ENCODE measurements at regions of chr14 and their contacts with region 1.

Region 1: DNA sequence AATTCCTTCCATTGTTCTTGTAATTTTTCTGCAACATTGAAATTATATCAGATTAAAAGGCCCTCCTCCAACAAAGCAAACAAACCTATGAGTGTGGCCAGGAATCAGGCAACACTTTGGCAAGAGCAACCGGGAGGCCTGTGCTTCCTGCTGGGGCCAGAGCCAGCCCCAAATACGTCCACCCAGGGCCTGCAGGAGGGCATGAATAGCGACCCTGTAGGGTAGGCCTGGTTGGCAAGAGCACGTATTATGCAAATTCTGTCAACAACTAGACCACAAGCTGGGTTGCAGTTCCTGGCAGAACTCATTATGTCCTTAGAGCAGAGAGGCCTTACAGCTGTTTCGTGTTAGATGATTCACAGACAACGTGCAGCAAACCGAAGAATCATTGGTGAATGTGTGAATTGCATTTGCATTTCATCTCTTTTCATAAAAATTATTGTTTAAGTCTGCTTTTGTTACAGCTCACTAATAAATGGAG is 26.9 kb upstream of the LGALS3 start:
- DNase-seq: peak; percentile 95
- H3K4me3 Mint-ChIP-seq: peak overlapping the region; percentile 81
- H3K27ac Mint-ChIP-seq: peak overlapping the region; percentile 99
- H3K4me1 Mint-ChIP-seq: peaks cover 35% of the 10 kb centered on the region
- H3K27me3 Mint-ChIP-seq: no peaks in the 10 kb centered on the region
- CTCF ChIP-seq: no peak

Region 2: DNA sequence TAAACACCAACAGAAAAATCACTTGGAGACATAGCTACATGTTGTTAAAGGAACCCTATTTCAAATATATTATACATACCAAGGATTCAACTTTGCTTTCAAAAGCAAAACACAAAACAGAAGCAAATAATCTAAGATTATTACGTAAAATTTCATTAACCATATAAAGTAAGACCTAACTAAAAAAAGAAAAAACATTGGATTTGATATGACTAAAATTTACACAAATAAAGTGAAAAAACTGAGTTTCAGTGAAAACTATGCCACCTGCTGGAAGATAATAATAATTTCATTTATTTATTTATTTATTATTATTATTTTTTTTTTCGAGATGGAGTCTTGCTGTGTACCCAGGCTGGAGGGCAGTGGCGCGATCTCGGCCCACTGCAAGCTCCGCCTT is 120.5 kb before region 1 on chr14:
- CTCF ChIA-PET with region 1: no interaction called
- POLR2A ChIA-PET with region 1: no interaction called
- intact Hi-C with region 1: no loop called
- DNase-seq: no peak
- H3K4me3 Mint-ChIP-seq: no peak overlapping the region
- H3K27ac Mint-ChIP-seq: no peak overlapping the region
- H3K4me1 Mint-ChIP-seq: no peaks in the 10 kb centered on the region
- H3K27me3 Mint-ChIP-seq: no peaks in the 10 kb centered on the region
- CTCF ChIP-seq: peak; percentile 45

Region 3: DNA sequence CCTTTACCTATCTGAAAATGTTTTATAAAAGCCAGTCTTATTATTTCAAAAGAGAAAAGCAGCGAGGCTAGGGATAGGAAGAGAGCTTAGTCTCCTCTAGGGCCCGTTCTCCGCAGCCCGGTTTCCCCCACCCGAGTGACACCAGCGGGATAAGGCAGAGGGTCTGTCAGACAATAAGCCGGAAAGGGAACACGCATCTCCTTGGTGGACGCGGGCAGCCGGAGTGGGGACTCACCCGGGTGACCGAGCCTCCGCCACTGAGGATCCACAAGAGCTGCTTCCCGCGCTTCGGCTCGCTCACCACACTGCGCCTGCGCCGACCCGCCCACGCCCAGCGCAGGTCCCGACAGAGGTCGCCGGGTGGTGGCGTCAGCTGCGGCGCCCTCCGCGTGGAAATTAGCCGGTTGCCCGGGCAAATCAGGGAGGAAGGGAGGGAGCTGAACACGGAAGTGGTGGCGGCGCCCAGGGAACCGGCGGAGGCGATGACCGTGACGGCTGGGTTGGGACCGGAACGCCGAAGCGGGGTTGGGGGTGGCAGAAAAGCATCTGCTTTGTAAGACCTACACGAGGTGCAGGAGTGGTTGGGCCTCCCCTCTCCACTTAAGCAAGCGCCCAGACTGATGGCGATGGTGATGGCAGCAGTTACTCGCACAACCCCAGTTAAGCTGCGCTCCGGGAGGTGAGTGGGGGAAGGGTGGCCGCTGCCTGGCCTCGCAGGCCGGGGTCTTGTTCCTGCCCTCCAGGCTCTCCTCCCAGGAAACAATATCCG is 75.2 kb before region 1 on chr14 and contains the starts of genes SOCS4 and WDHD1:
- CTCF ChIA-PET with region 1: no interaction called
- POLR2A ChIA-PET with region 1: interaction called, 20 read pairs
- intact Hi-C with region 1: no loop called
- DNase-seq: peak; percentile 93
- H3K4me3 Mint-ChIP-seq: peak within 1 kb of the TSS; percentile 91
- H3K27ac Mint-ChIP-seq: peak within 1 kb of the TSS; percentile 88
- H3K4me1 Mint-ChIP-seq: peaks cover 20% of the 10 kb centered on the region
- H3K27me3 Mint-ChIP-seq: no peaks in the 10 kb centered on the region
- CTCF ChIP-seq: no peak
- total RNA-seq, gene SOCS4: 24.6 and 29.6 TPM in 2 replicates
- total RNA-seq, gene WDHD1: 5.8 and 6.5 TPM in 2 replicates

Region 4: DNA sequence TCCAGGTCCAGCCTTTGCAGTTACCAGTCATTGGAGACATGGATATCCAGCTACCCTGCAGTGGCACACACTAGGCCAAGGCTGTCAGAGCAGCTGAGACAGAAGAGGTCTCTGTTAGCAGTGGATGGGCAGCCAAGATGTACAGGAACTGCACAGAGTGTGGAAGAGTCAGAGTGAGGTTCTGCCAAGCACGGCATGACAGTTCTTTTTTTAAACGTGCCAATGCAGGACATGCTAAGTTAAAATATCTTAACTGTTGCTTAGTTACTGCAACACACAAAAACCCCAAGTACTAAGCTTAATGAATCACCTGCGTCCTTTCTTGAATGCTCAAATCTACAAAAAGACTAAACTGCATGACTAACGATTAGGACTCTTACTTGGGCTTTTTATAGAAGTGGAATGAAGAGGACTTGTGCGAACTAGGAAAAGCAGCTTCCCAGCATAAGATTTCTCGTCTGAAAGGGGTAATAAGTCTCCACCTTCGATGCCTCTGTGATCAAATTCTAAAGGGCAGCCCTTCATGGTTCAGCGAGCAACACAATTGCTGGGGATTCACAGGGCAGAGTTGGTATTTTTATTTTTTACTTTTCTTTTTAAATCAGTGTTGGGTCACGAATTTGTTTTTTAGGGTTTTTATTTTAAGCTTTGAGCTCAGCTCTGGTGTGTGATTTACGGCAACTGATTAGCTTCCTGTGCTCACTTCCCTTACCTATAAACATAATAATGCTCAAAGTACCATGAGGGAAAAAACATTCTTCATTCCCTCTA is 30.1 kb before region 1 on chr14:
- CTCF ChIA-PET with region 1: interaction called, 4 read pairs
- POLR2A ChIA-PET with region 1: interaction called, 140 read pairs
- intact Hi-C with region 1: no loop called
- DNase-seq: peak; percentile 81
- H3K4me3 Mint-ChIP-seq: peak overlapping the region; percentile 50
- H3K27ac Mint-ChIP-seq: peak overlapping the region; percentile 100
- H3K4me1 Mint-ChIP-seq: peaks cover 47% of the 10 kb centered on the region
- H3K27me3 Mint-ChIP-seq: no peaks in the 10 kb centered on the region
- CTCF ChIP-seq: no peak

Region 5: GRCh38 chr14:55123101-55123500 is 20.9 kb after region 1 on chr14:
- CTCF ChIA-PET with region 1: interaction called, 9 read pairs
- POLR2A ChIA-PET with region 1: interaction called, 385 read pairs
- intact Hi-C with region 1: no loop called
- DNase-seq: peak; percentile 61
- H3K4me3 Mint-ChIP-seq: no peak overlapping the region
- H3K27ac Mint-ChIP-seq: peak overlapping the region; percentile 52
- H3K4me1 Mint-ChIP-seq: peaks cover 30% of the 10 kb centered on the region
- H3K27me3 Mint-ChIP-seq: no peaks in the 10 kb centered on the region
- CTCF ChIP-seq: no peak

Region 6: DNA sequence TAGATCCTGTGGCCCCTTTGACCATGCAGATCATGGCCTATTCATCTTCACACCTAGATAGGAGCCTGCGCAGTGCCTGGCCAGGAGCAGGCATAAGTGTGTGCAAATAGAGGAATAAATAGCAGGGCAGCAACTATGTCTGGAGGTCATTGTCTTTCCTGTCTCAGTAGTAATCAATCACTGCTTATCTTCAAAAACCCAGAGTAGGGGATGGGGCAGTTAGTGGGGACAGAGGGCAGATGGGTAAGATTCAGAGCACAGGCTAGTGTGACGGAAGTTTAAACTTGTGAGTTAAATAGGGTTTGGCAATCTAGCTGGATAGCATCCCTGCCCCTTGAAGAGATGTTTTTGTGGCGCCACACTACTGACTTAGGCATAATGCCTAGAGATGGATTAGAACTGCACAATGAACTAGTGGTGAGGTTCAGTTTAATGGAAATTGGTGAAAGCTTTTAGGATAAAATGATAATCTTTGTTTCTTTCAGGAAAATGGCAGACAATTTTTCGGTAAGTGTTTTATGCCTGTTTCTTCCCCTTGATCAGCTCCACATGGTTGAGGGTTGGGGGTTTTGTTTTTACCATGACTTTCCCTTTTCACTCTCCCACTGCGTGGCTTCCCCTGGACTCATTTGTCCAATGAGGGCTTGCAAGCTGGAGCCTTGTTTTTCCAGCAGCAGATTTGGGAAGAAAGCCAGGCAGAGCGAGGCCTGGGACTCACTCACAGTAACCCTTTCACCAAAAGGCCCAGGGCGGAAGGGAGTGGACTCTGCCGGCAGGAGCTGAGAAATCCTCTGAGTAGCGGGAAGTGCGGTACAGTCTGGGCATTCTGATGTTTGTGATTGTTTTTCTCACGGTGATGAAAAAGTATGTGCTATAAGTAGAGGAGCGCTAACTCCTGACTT is 35.0 kb after region 1 on chr14:
- CTCF ChIA-PET with region 1: interaction called, 13 read pairs
- POLR2A ChIA-PET with region 1: interaction called, 385 read pairs
- intact Hi-C with region 1: no loop called
- DNase-seq: peak; percentile 62
- H3K4me3 Mint-ChIP-seq: peak overlapping the region; percentile 47
- H3K27ac Mint-ChIP-seq: peak overlapping the region; percentile 76
- H3K4me1 Mint-ChIP-seq: peaks cover 24% of the 10 kb centered on the region
- H3K27me3 Mint-ChIP-seq: no peaks in the 10 kb centered on the region
- CTCF ChIP-seq: no peak

Region 7: GRCh38 chr14:55160989-55161388 is 58.8 kb after region 1 on chr14:
- CTCF ChIA-PET with region 1: interaction called, 15 read pairs
- POLR2A ChIA-PET with region 1: interaction called, 5 read pairs
- intact Hi-C with region 1: no loop called
- DNase-seq: peak; percentile 37
- H3K4me3 Mint-ChIP-seq: no peak overlapping the region
- H3K27ac Mint-ChIP-seq: peak overlapping the region; percentile 14
- H3K4me1 Mint-ChIP-seq: peaks cover 6% of the 10 kb centered on the region
- H3K27me3 Mint-ChIP-seq: no peaks in the 10 kb centered on the region
- CTCF ChIP-seq: peak; percentile 46

Region 8: GRCh38 chr14:55254581-55254980 is 152.4 kb after region 1 on chr14:
- CTCF ChIA-PET with region 1: no interaction called
- POLR2A ChIA-PET with region 1: no interaction called
- intact Hi-C with region 1: no loop called
- DNase-seq: no peak
- H3K4me3 Mint-ChIP-seq: no peak overlapping the region
- H3K27ac Mint-ChIP-seq: no peak overlapping the region
- H3K4me1 Mint-ChIP-seq: no peaks in the 10 kb centered on the region
- H3K27me3 Mint-ChIP-seq: peaks cover 57% of the 10 kb centered on the region
- CTCF ChIP-seq: no peak